Activated T-helper 1 cell treated with anti-CD3 and anti-CD28 coated beads, Interleukin-12 subunit alpha, Interleukin-12 subunit beta, Interleukin-2, Interleukin-4 antibody, amounts not matched to agents 30 ng/mL and 10 ng/mL and 1 ng/mL, durations not matched to agents 14 hours and 24 hours and 36 hours (primary cell): ENCODE measurements at regions of chr7 and their contacts with region 1.

Region 1: GRCh38 chr7:106659963-106660861 is 746 bp downstream of the CCDC71L start:
- DNase-seq: peak; percentile 73
- H3K4me3 Mint-ChIP-seq: peak overlapping the region; percentile 94
- H3K27ac Mint-ChIP-seq: peak overlapping the region; percentile 92
- H3K4me1 Mint-ChIP-seq: peaks cover 32% of the 10 kb centered on the region
- H3K27me3 Mint-ChIP-seq: peaks cover 3% of the 10 kb centered on the region

Region 2: GRCh38 chr7:106176414-106177299 is 483.6 kb before region 1 on chr7:
- intact Hi-C with region 1: loop called (anchors 1 kb)
- DNase-seq: peak; percentile 54
- H3K4me3 Mint-ChIP-seq: no peak overlapping the region
- H3K27ac Mint-ChIP-seq: no peak overlapping the region
- H3K4me1 Mint-ChIP-seq: peaks cover 5% of the 10 kb centered on the region
- H3K27me3 Mint-ChIP-seq: peaks cover 11% of the 10 kb centered on the region

Region 3: DNA sequence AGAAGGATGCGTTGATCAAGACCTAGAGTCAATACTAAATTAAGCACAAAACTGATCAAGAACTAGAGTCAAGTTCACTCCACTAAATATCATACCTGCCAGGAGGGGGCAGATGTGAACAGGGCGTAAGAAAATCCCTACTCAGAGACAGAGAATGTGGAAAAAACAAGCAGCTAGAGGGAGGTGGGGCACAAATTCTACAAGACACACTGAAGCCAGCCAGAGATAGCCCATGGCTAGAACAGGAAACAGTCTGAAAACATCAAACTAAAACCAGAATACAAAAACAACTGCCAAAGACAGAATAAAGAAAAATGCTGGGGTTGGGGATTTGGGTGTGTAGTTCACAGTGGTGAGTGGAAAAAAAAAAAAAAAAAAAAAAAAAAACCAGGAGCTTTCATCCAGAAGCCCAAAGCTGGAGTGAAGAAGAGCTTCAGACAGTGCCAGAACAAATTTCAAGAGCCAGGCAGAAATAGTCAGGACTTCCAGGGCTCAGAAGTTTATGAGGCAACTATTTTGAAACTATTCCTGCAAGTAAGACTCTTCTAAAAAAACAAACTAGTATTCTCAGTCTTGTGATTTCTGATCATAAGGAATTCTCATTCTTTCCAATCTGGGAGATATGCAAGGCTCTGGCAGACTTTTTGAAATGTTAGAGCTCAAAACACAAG is 117.5 kb before region 1 on chr7:
- intact Hi-C with region 1: loop called (anchors 1 kb)
- DNase-seq: no peak
- H3K4me3 Mint-ChIP-seq: no peak overlapping the region
- H3K27ac Mint-ChIP-seq: no peak overlapping the region
- H3K4me1 Mint-ChIP-seq: peaks cover 12% of the 10 kb centered on the region
- H3K27me3 Mint-ChIP-seq: no peaks in the 10 kb centered on the region

Region 4: GRCh38 chr7:106598663-106599342 is 61.4 kb before region 1 on chr7:
- intact Hi-C with region 1: loop called (anchors 2 kb)
- DNase-seq: peak; percentile 51
- H3K4me3 Mint-ChIP-seq: no peak overlapping the region
- H3K27ac Mint-ChIP-seq: no peak overlapping the region
- H3K4me1 Mint-ChIP-seq: no peaks in the 10 kb centered on the region
- H3K27me3 Mint-ChIP-seq: peaks cover 5% of the 10 kb centered on the region

Region 5: GRCh38 chr7:106717955-106718871 is 58.0 kb after region 1 on chr7:
- intact Hi-C with region 1: loop called (anchors 1 kb)
- DNase-seq: peak; percentile 37
- H3K4me3 Mint-ChIP-seq: no peak overlapping the region
- H3K27ac Mint-ChIP-seq: no peak overlapping the region
- H3K4me1 Mint-ChIP-seq: peaks cover 11% of the 10 kb centered on the region
- H3K27me3 Mint-ChIP-seq: no peaks in the 10 kb centered on the region

Region 6: DNA sequence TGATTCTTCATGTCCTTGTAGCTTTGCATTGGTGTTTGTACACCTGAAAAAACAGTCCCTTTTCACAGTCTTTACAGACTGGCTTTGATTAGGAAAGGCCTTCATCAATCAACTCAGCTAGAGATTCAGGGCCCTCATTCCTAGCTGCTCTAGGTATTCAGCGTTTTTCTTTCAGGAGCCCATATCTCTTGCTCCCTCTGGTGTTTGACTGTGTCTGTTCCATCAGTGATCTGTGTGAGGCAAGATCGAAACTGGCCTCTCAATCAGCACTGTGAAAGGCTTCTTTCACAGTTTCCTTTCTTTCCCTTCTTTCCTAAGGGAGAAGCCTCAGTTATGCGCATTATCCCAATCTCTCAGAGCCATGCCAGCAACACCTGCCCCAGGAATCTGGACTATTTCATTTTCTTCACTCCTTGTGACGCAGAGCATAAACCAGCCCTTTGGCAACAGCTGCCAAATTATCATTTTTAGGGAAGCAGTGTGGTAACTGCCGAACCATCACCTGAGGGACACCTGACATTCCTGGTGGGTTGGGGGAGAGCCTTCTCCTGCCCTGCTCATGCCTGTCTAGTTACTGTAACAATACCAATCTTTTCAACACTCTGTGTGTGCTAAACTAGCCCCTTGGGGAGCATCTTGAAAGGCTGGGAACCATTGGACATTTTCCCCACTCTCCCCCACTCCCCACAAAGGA is 76.4 kb after region 1 on chr7:
- intact Hi-C with region 1: loop called (anchors 1 kb)
- DNase-seq: peak; percentile 31
- H3K4me3 Mint-ChIP-seq: no peak overlapping the region
- H3K27ac Mint-ChIP-seq: no peak overlapping the region
- H3K4me1 Mint-ChIP-seq: peaks cover 32% of the 10 kb centered on the region
- H3K27me3 Mint-ChIP-seq: peaks cover 2% of the 10 kb centered on the region